RWPE1 (cell line): ENCODE measurements at regions of chr7 and their contacts with region 1.

Region 1: GRCh38 chr7:5665094-5666025 is 116.1 kb downstream of the RNF216 start:
- DNase-seq: peak; percentile 73
- H3K27ac ChIP-seq: peak overlapping the region; percentile 62
- CTCF ChIP-seq: peak; percentile 93

Region 2: GRCh38 chr7:5557920-5558401 is 107.4 kb before region 1 on chr7:
- CTCF ChIA-PET with region 1: interaction called, 10 read pairs
- POLR2A ChIA-PET with region 1: no interaction called
- DNase-seq: peak; percentile 65
- H3K27ac ChIP-seq: peak overlapping the region; percentile 100
- CTCF ChIP-seq: no peak

Region 3: GRCh38 chr7:5646852-5647251 is 18.5 kb before region 1 on chr7:
- CTCF ChIA-PET with region 1: interaction called, 10 read pairs
- POLR2A ChIA-PET with region 1: no interaction called
- DNase-seq: peak; percentile 88
- H3K27ac ChIP-seq: peak overlapping the region; percentile 98
- CTCF ChIP-seq: no peak

Region 4: GRCh38 chr7:6242561-6242960 is 577.2 kb after region 1 on chr7:
- CTCF ChIA-PET with region 1: no interaction called
- POLR2A ChIA-PET with region 1: no interaction called
- DNase-seq: no peak
- H3K27ac ChIP-seq: peak overlapping the region; percentile 9; the same call in 1 of the 2 replicates
- CTCF ChIP-seq: no peak